ENCODE measurements at regions of chr3 and their contacts with region 1.

Region 1: DNA sequence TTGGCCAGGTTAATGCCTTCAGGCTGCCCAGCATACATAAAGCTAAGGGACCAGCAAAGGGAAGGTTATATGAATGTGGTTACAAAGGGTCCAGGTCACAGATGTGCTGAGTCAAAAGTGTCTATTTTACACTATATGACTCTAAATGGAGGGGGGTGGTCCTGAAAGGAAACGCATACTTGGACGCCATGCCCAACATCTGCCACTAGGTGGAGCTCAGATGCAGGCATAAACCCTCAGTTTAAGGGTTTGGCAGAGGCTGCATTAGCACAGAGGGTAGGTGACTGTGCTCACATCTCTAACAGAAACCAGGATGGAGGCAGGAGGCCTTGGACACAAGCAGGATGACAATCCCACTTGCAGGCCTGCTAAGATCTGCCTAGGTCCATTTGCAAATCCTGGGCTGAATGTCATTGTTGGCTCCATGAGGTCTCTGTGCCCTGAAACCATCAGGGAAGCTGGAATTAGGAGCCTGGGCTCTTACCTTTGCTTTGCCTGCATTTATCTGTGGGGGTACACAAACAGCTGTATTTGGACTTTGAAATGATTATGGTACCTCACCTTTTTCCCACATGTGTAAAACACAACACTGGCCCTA is 55.8 kb downstream of the ZNF621 start:
- DNase-seq: peak; percentile 78
- ATAC-seq: peak; percentile 88
- H3K4me3 Mint-ChIP-seq: no peak overlapping the region
- H3K27ac Mint-ChIP-seq: no peak overlapping the region
- H3K4me1 Mint-ChIP-seq: no peaks in the 10 kb centered on the region
- H3K27me3 Mint-ChIP-seq: peaks cover 2% of the 10 kb centered on the region
- CTCF ChIP-seq: peak; percentile 86

Region 2: GRCh38 chr3:40329071-40329470 is 251.5 kb before region 1 on chr3:
- CTCF ChIA-PET with region 1: interaction called, 8 read pairs
- POLR2A ChIA-PET with region 1: no interaction called
- intact Hi-C with region 1: loop called (anchors 5 kb)
- DNase-seq: no peak
- ATAC-seq: no peak
- H3K4me3 Mint-ChIP-seq: no peak overlapping the region
- H3K27ac Mint-ChIP-seq: no peak overlapping the region
- H3K4me1 Mint-ChIP-seq: peaks cover 3% of the 10 kb centered on the region
- H3K27me3 Mint-ChIP-seq: no peaks in the 10 kb centered on the region
- CTCF ChIP-seq: no peak

Region 3: GRCh38 chr3:40355410-40355809 is 225.2 kb before region 1 on chr3:
- CTCF ChIA-PET with region 1: no interaction called
- POLR2A ChIA-PET with region 1: no interaction called
- intact Hi-C with region 1: no loop called
- DNase-seq: no peak
- ATAC-seq: no peak
- H3K4me3 Mint-ChIP-seq: no peak overlapping the region
- H3K27ac Mint-ChIP-seq: no peak overlapping the region
- H3K4me1 Mint-ChIP-seq: no peaks in the 10 kb centered on the region
- H3K27me3 Mint-ChIP-seq: peaks cover 23% of the 10 kb centered on the region
- CTCF ChIP-seq: no peak

Region 4: GRCh38 chr3:41881233-41881821 is 1300.7 kb after region 1 on chr3:
- CTCF ChIA-PET with region 1: interaction called, 22 read pairs
- POLR2A ChIA-PET with region 1: no interaction called
- intact Hi-C with region 1: loop called (anchors 2 kb)
- DNase-seq: peak; percentile 2
- ATAC-seq: no peak
- H3K4me3 Mint-ChIP-seq: no peak overlapping the region
- H3K27ac Mint-ChIP-seq: no peak overlapping the region
- H3K4me1 Mint-ChIP-seq: no peaks in the 10 kb centered on the region
- H3K27me3 Mint-ChIP-seq: no peaks in the 10 kb centered on the region
- CTCF ChIP-seq: peak; percentile 71